Left cardiac atrium (tissue), 4 donors: ENCODE measurements at regions of chr6 and their contacts with region 1.

Region 1: DNA sequence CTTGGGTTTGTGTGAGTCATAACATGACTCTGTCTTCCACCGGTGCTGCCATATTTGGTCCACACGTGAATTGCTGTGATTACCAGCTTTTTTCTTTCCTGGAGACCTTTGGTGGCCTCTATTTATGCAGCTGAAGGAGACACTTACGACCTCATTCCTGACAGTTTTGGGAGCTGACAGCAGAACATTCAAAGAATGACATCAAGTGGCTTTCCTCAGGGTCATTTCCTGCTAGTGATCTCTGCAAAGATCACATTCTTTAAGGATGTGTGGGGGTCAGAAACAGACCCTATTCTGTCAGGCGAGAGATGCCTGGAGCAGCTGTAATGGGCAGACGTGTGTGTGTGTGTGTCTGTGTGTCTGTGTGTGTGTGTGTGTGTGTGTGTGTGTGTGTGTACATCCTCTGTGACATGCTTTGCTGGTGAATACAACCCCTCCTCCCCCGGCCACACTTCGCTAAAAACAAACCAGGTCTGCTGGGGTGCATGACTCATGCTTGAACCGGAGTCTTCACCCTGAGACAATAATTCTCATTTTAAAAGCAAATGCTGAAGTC is 115.6 kb downstream of the TMEM170B start:
- DNase-seq: peak; percentile 46
- ATAC-seq: peak; percentile 29 to 52

Region 2: DNA sequence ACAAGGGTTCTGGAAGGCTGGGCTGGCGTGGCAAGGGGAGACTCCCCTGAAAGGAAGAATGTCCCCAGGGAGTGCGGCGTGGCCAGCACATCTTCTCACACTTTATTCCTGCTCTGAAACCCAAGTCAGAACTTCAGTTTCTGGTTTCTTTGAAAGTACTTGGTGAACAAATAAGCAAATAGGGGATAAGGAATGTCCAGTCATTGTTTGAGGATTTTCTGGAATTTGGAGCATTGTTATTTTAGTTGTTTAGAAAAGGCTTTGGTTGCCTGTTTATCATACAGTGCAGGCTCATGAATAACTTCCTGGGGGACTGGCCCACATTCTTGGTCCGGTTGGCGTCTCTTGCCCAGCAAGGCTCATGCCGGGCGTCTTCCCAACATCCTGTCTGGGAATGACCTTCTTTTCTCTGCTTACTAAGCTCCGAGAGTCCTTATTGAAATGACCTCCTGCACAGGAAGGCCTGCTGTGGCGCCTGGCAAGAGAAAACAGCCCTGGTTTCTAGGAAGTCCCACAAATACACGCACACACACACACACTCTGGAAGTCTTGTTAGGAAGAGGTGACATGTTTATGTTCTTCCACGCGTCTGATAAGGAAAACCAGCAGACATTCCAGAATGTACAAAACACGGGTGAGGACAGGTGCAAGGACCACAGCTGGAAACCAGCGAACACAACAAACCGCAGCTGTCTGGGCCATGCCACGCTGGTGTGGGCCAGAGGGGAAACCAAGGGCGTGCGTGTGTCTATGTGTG is 43.6 kb before region 1 on chr6:
- intact Hi-C with region 1: loop called in 1 of 2 experiments (anchors 5 kb)
- DNase-seq: peak; percentile 79
- ATAC-seq: peak; percentile 73

Region 3: DNA sequence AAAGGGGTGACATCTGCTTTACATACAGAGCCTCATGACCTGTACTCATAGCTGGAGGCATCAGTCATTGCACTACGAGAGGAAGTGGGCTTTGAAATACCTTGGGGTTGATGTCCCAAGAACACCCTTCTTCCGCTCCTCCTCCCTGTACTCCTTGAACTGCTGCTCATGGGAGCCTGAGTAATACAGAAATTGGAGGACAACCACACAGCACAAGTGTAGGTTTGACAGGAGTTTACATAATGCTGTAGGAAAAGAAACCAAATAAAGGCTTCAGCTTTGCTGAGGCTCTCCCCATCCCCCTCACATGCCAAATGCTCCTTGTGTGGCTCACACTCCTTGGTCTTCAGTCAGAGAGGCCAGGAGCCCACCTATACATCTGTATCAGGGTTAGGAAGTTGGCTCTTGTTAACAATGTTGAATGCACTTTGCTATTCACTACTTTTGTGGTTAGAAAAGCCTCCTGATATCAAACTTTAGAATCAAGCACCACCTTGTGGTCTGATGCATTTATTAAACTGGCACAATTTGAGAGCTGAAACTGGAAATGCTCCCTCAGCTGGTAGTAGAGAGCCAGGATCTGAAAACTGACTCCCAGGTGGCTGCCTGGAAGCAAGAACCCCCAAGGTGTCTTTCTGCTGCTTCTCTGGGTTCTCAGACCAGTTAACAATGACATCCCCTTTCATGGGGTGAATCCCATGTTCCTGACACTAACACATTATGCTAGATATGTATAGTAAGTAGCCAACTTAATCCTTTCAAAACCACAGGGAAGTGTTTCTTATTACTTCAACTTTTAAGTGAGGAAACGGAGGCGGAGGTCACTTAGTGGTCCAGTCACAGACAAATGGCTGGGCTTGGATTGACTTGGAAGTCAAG is 580.8 kb after region 1 on chr6:
- intact Hi-C with region 1: loop called (anchors 2 to 5 kb)
- DNase-seq: no peak
- ATAC-seq: peak; percentile 65 to 78

Region 4: GRCh38 chr6:12289933-12290820 is 637.1 kb after region 1 on chr6 and contains the start of gene EDN1:
- intact Hi-C with region 1: loop called in 1 of 2 experiments (anchors 5 kb)
- DNase-seq: peak; percentile 83
- ATAC-seq: peak; percentile 89 to 92
- total RNA-seq, gene EDN1: 2.7 to 25.4 TPM

Region 5: DNA sequence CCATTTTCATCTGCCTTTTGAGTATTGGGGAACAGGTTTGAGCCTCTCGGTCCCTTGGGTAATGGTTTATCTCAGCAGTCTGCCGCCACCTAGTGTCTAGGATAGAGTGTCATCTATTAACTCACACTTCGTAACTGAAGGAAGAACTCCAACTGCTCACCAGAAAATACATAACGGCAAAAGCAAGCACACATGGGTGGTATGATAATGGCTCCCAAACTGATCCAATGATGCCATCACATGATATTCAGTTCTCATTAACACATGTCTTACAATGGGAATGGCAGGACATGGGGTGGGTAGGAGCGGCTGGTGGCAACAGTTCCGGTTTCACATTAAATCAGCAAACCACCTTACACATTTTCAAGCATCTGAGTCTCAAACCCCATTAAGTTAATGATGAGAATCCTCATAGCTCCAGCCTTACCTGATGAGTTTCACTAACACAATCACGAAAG is 952.8 kb after region 1 on chr6:
- intact Hi-C with region 1: loop called in 1 of 2 experiments (anchors 5 kb)
- DNase-seq: peak; percentile 35
- ATAC-seq: peak in 1 of 2 donors; percentile 69